H1 (cell line): ENCODE measurements at regions of chr11 and their contacts with region 1.

Region 1: GRCh38 chr11:122628810-122629555 is 26.5 kb upstream of the UBASH3B start:
- DNase-seq: peak; percentile 34 to 86
- H3K4me3 ChIP-seq: no peak overlapping the region
- H3K27ac ChIP-seq: no peak overlapping the region
- H3K4me1 ChIP-seq: no peaks in the 10 kb centered on the region
- H3K27me3 ChIP-seq: no peaks in the 10 kb centered on the region
- CTCF ChIP-seq: peak; percentile 85 to 94 (median 88)
- EP300 ChIP-seq: no peak
- POLR2A ChIP-seq: no peak
- RAD21 ChIP-seq: peak; percentile 81 to 86

Region 2: GRCh38 chr11:122468965-122469364 is 160.0 kb before region 1 on chr11:
- CTCF ChIA-PET with region 1: no interaction called
- POLR2A ChIA-PET with region 1: no interaction called
- DNase-seq: no peak
- H3K4me3 ChIP-seq: no peak overlapping the region
- H3K27ac ChIP-seq: no peak overlapping the region
- H3K4me1 ChIP-seq: no peaks in the 10 kb centered on the region
- H3K27me3 ChIP-seq: no peaks in the 10 kb centered on the region
- CTCF ChIP-seq: no peak
- EP300 ChIP-seq: no peak
- POLR2A ChIP-seq: no peak
- RAD21 ChIP-seq: no peak

Region 3: DNA sequence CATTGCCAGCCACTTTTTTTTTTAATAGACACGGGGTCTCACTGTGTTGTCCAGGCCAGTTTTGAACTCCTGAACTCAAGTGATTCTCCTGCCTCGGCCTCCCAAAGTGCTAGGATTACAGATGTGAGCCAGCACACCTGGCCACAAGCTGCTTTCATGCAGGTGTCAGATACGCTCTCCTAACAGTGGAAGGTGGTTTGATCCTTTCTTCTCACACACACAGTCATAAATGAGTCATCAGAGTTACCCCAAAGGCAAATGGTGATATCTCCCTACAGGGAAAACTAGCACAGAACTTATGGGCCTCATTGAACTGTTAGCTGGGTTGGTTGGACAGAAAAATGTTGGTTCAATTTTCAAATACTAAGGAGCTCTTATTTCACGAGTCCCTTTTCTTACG is 11.7 kb before region 1 on chr11:
- CTCF ChIA-PET with region 1: interaction called, 12 read pairs
- POLR2A ChIA-PET with region 1: no interaction called
- DNase-seq: no peak
- H3K4me3 ChIP-seq: no peak overlapping the region
- H3K27ac ChIP-seq: no peak overlapping the region
- H3K4me1 ChIP-seq: no peaks in the 10 kb centered on the region
- H3K27me3 ChIP-seq: no peaks in the 10 kb centered on the region
- CTCF ChIP-seq: no peak
- EP300 ChIP-seq: no peak
- POLR2A ChIP-seq: no peak
- RAD21 ChIP-seq: no peak

Region 4: GRCh38 chr11:122661182-122661945 is 32.4 kb after region 1 on chr11:
- CTCF ChIA-PET with region 1: interaction called, 16 read pairs
- POLR2A ChIA-PET with region 1: interaction called, 4 read pairs
- DNase-seq: no peak
- H3K4me3 ChIP-seq: no peak overlapping the region
- H3K27ac ChIP-seq: no peak overlapping the region
- H3K4me1 ChIP-seq: peaks cover 0 to 2% (median 0%) of the 10 kb centered on the region in 4 experiments; a peak in 3 of 7 replicates
- H3K27me3 ChIP-seq: peaks cover 0 to 5% (median 1%) of the 10 kb centered on the region in 4 experiments; a peak in 3 of 7 replicates
- CTCF ChIP-seq: no peak
- EP300 ChIP-seq: no peak
- POLR2A ChIP-seq: no peak
- RAD21 ChIP-seq: no peak

Region 5: DNA sequence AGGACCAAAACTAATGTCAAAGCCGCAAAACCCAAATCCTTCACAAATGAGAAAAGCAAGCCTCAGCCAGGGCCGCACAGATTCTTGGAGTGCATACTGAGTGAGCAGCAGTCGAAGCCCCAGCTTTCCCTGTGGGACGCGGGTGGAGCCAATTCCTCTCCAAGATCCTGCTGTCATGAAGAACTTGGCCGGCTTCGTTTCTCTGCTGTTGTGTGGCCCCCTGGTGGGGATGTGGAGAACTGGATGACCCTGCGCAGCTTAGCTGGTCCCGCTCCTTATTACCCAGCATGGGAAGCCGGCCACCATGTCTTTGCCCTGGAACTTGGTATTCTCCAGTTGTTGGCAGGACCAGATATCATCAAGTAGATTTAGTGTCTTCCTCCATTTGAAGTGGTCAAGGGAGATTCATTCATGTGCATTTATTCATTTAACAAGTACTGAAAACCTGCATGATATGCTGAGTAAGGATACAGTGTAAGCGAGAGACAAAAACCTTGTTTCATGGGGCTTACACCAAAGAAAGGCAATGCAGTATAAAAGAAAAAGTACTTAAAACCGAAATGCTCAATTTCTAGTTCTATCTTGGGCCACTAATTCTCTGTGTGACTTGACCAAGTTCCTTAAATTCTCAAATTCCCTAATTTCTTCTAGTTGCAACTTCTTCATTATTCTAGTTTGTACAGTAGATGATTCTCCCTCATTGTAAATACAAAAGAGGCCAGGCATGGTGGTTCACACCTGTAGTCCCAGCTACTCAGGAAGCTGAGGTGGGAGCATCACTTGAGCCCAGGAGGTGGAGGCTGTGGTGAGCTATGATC is 152.6 kb after region 1 on chr11:
- CTCF ChIA-PET with region 1: interaction called, 290 read pairs
- POLR2A ChIA-PET with region 1: interaction called, 3 read pairs
- DNase-seq: peak; percentile 77 to 95
- H3K4me3 ChIP-seq: no peak overlapping the region
- H3K27ac ChIP-seq: no peak overlapping the region
- H3K4me1 ChIP-seq: peaks cover 0 to 2% (median 0%) of the 10 kb centered on the region in 4 experiments; a peak in 4 of 7 replicates
- H3K27me3 ChIP-seq: no peaks in the 10 kb centered on the region
- CTCF ChIP-seq: peak; percentile 81 to 95 (median 93)
- EP300 ChIP-seq: no peak
- POLR2A ChIP-seq: no peak
- RAD21 ChIP-seq: peak; percentile 89 to 94

Region 6: DNA sequence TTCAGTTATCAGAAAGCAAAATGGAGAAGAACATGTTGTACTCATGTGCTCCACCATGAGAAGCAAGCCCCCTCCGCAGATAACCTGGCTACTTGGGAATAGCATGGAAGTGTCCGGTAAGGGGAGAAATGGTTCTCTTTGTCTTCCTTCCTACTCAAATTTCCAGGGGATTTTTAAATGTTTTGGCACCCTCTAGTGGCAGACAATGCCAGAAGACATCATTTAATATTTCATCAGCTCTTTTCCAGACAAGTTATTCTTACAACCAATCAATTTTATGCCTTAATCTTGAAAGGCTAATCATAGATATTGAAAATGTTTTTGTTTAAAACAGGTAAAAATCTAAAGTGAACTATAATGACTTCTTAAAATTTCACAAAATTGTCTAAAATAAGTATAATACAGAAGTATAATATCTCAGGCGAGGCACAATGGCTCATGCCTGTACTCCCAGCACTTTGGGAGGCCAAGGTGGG is 225.0 kb after region 1 on chr11:
- CTCF ChIA-PET with region 1: interaction called, 63 read pairs
- POLR2A ChIA-PET with region 1: no interaction called
- DNase-seq: peak in 1 of 2 experiments; percentile 53
- H3K4me3 ChIP-seq: no peak overlapping the region
- H3K27ac ChIP-seq: no peak overlapping the region
- H3K4me1 ChIP-seq: peaks cover 0 to 2% (median 0%) of the 10 kb centered on the region in 4 experiments; a peak in 4 of 7 replicates
- H3K27me3 ChIP-seq: no peaks in the 10 kb centered on the region
- CTCF ChIP-seq: peak in 2 of 3 experiments; percentile 59 to 69; a peak in 3 of 4 replicates
- EP300 ChIP-seq: no peak
- POLR2A ChIP-seq: no peak
- RAD21 ChIP-seq: peak; percentile 84 to 85